CD4-positive, alpha-beta T cell (primary cell): ENCODE measurements at regions of chr1 and their contacts with region 1.

Region 1: GRCh38 chr1:8525558-8526275 is 207.8 kb downstream of the SLC45A1 start:
- DNase-seq: peak; percentile 55 to 94 (median 64)
- ATAC-seq: peak; percentile 92
- H3K4me3 ChIP-seq: peak overlapping the region; percentile 65
- H3K4me3 Mint-ChIP-seq: no peak overlapping the region
- H3K27ac ChIP-seq: peak overlapping the region; percentile 92 to 93
- H3K27ac Mint-ChIP-seq: no peak overlapping the region
- H3K4me1 ChIP-seq: peaks cover 34% of the 10 kb centered on the region
- H3K4me1 Mint-ChIP-seq: peaks cover 27% of the 10 kb centered on the region
- H3K27me3 ChIP-seq: no peaks in the 10 kb centered on the region
- H3K27me3 Mint-ChIP-seq: no peaks in the 10 kb centered on the region
- CTCF ChIP-seq: no peak

Region 2: DNA sequence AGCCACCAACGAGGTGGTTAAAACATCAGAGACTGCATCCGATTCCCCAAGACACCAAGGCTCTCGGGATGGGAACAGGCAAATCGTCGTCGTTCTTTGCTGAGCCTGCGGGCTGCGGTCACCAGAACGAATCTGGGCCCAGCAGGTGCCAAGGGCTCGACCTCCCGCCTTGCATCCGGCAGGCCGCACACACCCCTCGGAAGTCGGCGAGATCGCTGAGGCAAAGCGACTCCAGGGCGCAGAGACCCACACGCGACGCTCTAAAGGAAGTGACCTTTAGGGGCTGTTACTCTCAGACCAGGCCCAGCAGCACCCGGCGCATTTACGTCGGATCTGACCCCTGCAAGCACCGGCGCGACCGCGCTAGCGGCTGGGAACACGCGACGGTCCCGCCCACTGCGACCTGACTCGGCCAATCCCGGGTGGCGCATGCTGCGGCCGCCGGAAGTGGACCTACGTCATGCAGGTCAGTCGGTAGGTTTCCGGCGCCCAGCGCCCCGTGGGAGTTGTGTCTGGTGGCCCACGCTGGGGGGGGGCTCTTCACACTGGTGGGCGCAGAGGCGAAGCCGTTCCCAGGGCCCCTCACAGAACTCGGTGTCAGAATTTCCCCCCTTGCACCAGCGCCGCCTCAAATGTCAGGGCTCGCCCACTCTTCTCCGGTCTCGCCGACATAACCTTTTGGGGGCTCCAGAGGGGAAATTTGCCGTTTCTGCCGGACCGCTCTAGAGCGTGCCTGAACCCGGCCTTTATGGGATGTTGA is 571.7 kb before region 1 on chr1:
- CTCF ChIA-PET with region 1: no interaction called
- POLR2A ChIA-PET with region 1: no interaction called
- intact Hi-C with region 1: loop called in 1 of 2 experiments (anchors 5 kb)
- DNase-seq: peak; percentile 31 to 88 (median 66)
- ATAC-seq: peak; percentile 59
- H3K4me3 ChIP-seq: peak overlapping the region; percentile 88
- H3K4me3 Mint-ChIP-seq: peak overlapping the region; percentile 93
- H3K27ac ChIP-seq: peak overlapping the region; percentile 83 to 93
- H3K27ac Mint-ChIP-seq: peak overlapping the region; percentile 89
- H3K4me1 ChIP-seq: peaks cover 43% of the 10 kb centered on the region
- H3K4me1 Mint-ChIP-seq: peaks cover 46% of the 10 kb centered on the region
- H3K27me3 ChIP-seq: no peaks in the 10 kb centered on the region
- H3K27me3 Mint-ChIP-seq: no peaks in the 10 kb centered on the region
- CTCF ChIP-seq: no peak

Region 3: GRCh38 chr1:8259498-8260290 is 266.0 kb before region 1 on chr1:
- CTCF ChIA-PET with region 1: no interaction called
- POLR2A ChIA-PET with region 1: no interaction called
- intact Hi-C with region 1: no loop called
- DNase-seq: no peak
- ATAC-seq: no peak
- H3K4me3 ChIP-seq: no peak overlapping the region
- H3K4me3 Mint-ChIP-seq: no peak overlapping the region
- H3K27ac ChIP-seq: no peak overlapping the region
- H3K27ac Mint-ChIP-seq: no peak overlapping the region
- H3K4me1 ChIP-seq: no peaks in the 10 kb centered on the region
- H3K4me1 Mint-ChIP-seq: no peaks in the 10 kb centered on the region
- H3K27me3 ChIP-seq: no peaks in the 10 kb centered on the region
- H3K27me3 Mint-ChIP-seq: peaks cover 14% of the 10 kb centered on the region
- CTCF ChIP-seq: no peak

Region 4: GRCh38 chr1:8423650-8424538 is 101.8 kb before region 1 on chr1:
- CTCF ChIA-PET with region 1: no interaction called
- POLR2A ChIA-PET with region 1: interaction called, 39 read pairs
- intact Hi-C with region 1: loop called (anchors 2 to 5 kb)
- DNase-seq: peak in 12 of 14 experiments; percentile 22 to 74 (median 47)
- ATAC-seq: peak; percentile 54
- H3K4me3 ChIP-seq: peak overlapping the region; percentile 88
- H3K4me3 Mint-ChIP-seq: peak overlapping the region; percentile 97
- H3K27ac ChIP-seq: peak overlapping the region; percentile 54 to 87
- H3K27ac Mint-ChIP-seq: peak overlapping the region; percentile 96
- H3K4me1 ChIP-seq: peaks cover 67% of the 10 kb centered on the region
- H3K4me1 Mint-ChIP-seq: peaks cover 44% of the 10 kb centered on the region
- H3K27me3 ChIP-seq: no peaks in the 10 kb centered on the region
- H3K27me3 Mint-ChIP-seq: no peaks in the 10 kb centered on the region
- CTCF ChIP-seq: no peak

Region 5: DNA sequence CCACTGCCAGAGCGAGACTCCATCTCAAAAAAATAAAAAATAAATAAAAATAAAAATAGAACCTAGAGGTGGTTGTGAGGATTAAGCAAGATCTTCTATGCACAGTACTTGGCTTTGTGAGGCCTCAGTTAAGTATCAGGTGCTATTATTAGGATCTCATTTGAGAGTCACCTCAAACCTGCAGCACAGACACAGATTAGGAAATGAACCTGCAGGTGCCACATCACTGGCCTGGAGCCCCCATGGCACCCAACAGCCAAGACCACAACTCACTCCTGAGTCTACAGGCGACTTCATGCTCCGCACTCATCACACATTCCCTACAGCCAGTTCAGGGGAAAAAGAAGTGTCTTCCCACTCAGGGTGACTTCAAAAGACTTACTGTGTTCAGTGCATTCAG is 31.0 kb before region 1 on chr1:
- CTCF ChIA-PET with region 1: no interaction called
- POLR2A ChIA-PET with region 1: interaction called, 4 read pairs
- intact Hi-C with region 1: loop called in 1 of 2 experiments (anchors 5 kb)
- DNase-seq: no peak
- ATAC-seq: no peak
- H3K4me3 ChIP-seq: no peak overlapping the region
- H3K4me3 Mint-ChIP-seq: no peak overlapping the region
- H3K27ac ChIP-seq: no peak overlapping the region
- H3K27ac Mint-ChIP-seq: no peak overlapping the region
- H3K4me1 ChIP-seq: no peaks in the 10 kb centered on the region
- H3K4me1 Mint-ChIP-seq: peaks cover 9% of the 10 kb centered on the region
- H3K27me3 ChIP-seq: no peaks in the 10 kb centered on the region
- H3K27me3 Mint-ChIP-seq: no peaks in the 10 kb centered on the region
- CTCF ChIP-seq: no peak

Region 6: GRCh38 chr1:8551613-8552489 is 26.1 kb after region 1 on chr1:
- CTCF ChIA-PET with region 1: interaction called, 3 read pairs
- POLR2A ChIA-PET with region 1: interaction called, 10 read pairs
- intact Hi-C with region 1: no loop called
- DNase-seq: peak in 1 of 14 experiments; percentile 7
- ATAC-seq: no peak
- H3K4me3 ChIP-seq: no peak overlapping the region
- H3K4me3 Mint-ChIP-seq: no peak overlapping the region
- H3K27ac ChIP-seq: no peak overlapping the region
- H3K27ac Mint-ChIP-seq: no peak overlapping the region
- H3K4me1 ChIP-seq: peaks cover 8% of the 10 kb centered on the region
- H3K4me1 Mint-ChIP-seq: peaks cover 26% of the 10 kb centered on the region
- H3K27me3 ChIP-seq: no peaks in the 10 kb centered on the region
- H3K27me3 Mint-ChIP-seq: no peaks in the 10 kb centered on the region
- CTCF ChIP-seq: no peak